ENCODE measurements at regions of chr6 and their contacts with region 1.

Region 1: GRCh38 chr6:29887819-29888776 is 54.2 kb upstream of the HLA-A start:
- DNase-seq: peak; percentile 90 to 92
- ATAC-seq: peak; percentile 75 to 91 (median 77)
- H3K4me3 ChIP-seq: peak overlapping the region; percentile 92
- H3K4me3 Mint-ChIP-seq: peak overlapping the region; percentile 94
- H3K27ac ChIP-seq: peak overlapping the region; percentile 97
- H3K27ac Mint-ChIP-seq: peak overlapping the region; percentile 94 to 99
- H3K4me1 ChIP-seq: peaks cover 19% of the 10 kb centered on the region
- H3K4me1 Mint-ChIP-seq: peaks cover 12 to 30% of the 10 kb centered on the region in 2 donors
- H3K27me3 ChIP-seq: no peaks in the 10 kb centered on the region
- H3K27me3 Mint-ChIP-seq: no peaks in the 10 kb centered on the region
- CTCF ChIP-seq: no peak

Region 2: GRCh38 chr6:29926413-29927274 is 38.5 kb after region 1 on chr6:
- intact Hi-C with region 1: loop called (anchors 5 kb)
- DNase-seq: peak; percentile 76 to 92
- ATAC-seq: peak; percentile 86 to 95 (median 88)
- H3K4me3 ChIP-seq: peak overlapping the region; percentile 86
- H3K4me3 Mint-ChIP-seq: peak overlapping the region; percentile 88
- H3K27ac ChIP-seq: peak overlapping the region; percentile 98
- H3K27ac Mint-ChIP-seq: peak overlapping the region; percentile 90 to 91
- H3K4me1 ChIP-seq: peaks cover 17% of the 10 kb centered on the region
- H3K4me1 Mint-ChIP-seq: peaks cover 6 to 28% of the 10 kb centered on the region in 2 donors
- H3K27me3 ChIP-seq: no peaks in the 10 kb centered on the region
- H3K27me3 Mint-ChIP-seq: no peaks in the 10 kb centered on the region
- CTCF ChIP-seq: no peak

Region 3: GRCh38 chr6:29948277-29948676 is 60.2 kb after region 1 on chr6:
- intact Hi-C with region 1: loop called (anchors 1 kb)
- DNase-seq: no peak
- ATAC-seq: peak; percentile 4 to 13 (median 5)
- H3K4me3 ChIP-seq: no peak overlapping the region
- H3K4me3 Mint-ChIP-seq: peak overlapping the region; percentile 99
- H3K27ac ChIP-seq: no peak overlapping the region
- H3K27ac Mint-ChIP-seq: peak overlapping the region; percentile 89 to 100
- H3K4me1 ChIP-seq: peaks cover 38% of the 10 kb centered on the region
- H3K4me1 Mint-ChIP-seq: peaks cover 75 to 78% of the 10 kb centered on the region in 2 donors
- H3K27me3 ChIP-seq: no peaks in the 10 kb centered on the region
- H3K27me3 Mint-ChIP-seq: no peaks in the 10 kb centered on the region
- CTCF ChIP-seq: no peak